Body of pancreas (tissue), 4 donors: ENCODE measurements at regions of chr4 and their contacts with region 1.

Region 1: DNA sequence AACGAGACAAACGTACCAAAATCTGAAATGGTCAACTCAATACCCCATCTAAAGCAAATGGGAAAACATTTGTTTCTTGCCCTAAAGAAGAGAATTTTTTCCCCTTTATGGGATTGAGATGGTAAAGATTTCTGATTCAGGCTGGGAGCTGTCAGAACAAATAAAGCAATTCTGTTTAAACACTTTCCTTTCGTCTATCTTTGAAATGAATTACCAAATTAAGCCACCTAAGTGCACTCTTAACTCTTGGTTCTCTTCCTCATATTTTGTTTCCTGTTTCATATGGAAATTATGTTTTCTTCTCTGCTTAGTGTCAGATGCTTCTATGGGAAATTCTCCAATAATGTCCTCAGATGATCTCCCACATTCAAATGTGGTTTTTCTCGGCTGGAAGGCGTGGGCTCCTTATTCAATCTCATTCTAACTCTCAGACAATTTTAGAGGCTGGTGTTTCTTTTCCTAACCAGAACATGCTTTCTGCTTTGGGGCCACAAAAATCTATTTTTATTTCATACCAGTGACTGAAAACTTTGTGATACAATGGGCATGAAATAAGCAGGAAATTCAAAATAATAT is 50.3 kb upstream of the HPF1 start:
- DNase-seq: no peak
- ATAC-seq: no peak
- H3K4me3 ChIP-seq: no peak overlapping the region
- H3K27ac ChIP-seq: no peak overlapping the region
- H3K4me1 ChIP-seq: no peaks in the 10 kb centered on the region
- H3K27me3 ChIP-seq: no peaks in the 10 kb centered on the region
- CTCF ChIP-seq: no peak
- POLR2A ChIP-seq: no peak

Region 2: GRCh38 chr4:170051402-170051801 is 243.4 kb after region 1 on chr4:
- intact Hi-C with region 1: loop called (anchors 5 kb)
- DNase-seq: no peak
- ATAC-seq: no peak
- H3K4me3 ChIP-seq: no peak overlapping the region
- H3K27ac ChIP-seq: no peak overlapping the region
- H3K4me1 ChIP-seq: no peaks in the 10 kb centered on the region
- H3K27me3 ChIP-seq: no peaks in the 10 kb centered on the region
- CTCF ChIP-seq: no peak
- POLR2A ChIP-seq: no peak